ENCODE measurements at regions of chr5 and their contacts with region 1.

Region 1: DNA sequence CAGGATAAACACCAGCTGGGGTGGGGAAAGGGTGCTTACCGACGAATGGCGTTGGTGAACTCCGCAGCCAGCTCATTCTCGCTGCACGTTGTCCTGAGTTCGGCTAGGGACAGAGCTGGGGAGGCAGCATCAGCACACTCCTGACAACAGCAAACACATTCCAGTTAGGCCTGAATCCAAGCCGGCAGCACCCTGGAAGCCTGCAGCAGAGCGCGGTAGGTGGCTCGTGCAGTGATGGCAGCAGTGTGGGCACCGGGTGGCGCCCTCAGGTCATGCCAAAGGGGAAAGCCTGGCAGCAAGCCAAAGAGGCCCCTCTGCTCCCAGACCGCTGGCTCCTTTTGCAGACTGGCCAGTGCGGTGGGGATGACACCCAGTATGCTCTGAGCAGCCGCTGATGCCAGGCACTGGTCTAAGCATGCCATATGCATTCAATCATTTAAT is 66.9 kb downstream of the DCP2 start:
- DNase-seq: no peak
- ATAC-seq: no peak
- H3K4me3 ChIP-seq: no peak overlapping the region
- H3K27ac ChIP-seq: no peak overlapping the region
- H3K4me1 ChIP-seq: peaks cover 9% of the 10 kb centered on the region
- H3K27me3 ChIP-seq: 0 out of 4 replicates have a peak, but pooled peaks cover 0 to 2% of the 10 kb centered on the region in 2 experiments
- CTCF ChIP-seq: peak in 2 of 3 experiments; percentile 17 to 39; a peak in 3 of 6 replicates
- EP300 ChIP-seq: no peak
- POLR2A ChIP-seq: no peak
- RAD21 ChIP-seq: 0 out of 2 replicates have a peak, but pooled peaks have one; percentile 19

Region 2: DNA sequence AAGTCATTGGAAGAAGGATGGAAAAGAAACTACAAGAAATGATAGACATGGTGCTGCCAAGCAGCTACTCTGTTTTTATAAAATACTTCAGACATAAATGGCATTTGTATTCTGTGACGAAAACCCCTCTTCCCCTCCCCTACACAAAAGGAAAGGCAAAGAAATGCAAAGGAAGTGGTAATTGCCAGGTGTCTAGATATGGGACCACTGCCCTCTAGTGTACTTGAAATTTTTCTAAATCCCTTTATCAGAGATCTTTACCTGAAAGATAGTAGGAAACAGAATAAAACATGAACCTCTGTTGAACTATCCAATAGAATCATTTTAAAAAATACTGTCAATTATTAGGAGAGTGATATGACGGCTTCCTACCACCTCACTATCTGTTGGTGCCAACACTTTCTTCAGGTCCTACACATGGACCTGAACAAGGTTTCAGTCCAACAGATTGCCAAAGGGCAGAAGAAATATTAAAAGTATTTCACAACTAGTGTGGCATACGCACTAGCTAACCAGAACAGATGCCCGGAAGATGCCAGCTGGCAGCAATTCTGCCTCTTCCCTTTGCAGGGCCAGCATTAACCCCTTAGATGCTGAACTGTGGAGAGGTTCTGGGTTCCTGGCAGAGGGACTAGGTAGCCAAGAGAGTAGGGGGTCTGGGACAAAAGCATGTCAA is 287.2 kb after region 1 on chr5:
- CTCF ChIA-PET with region 1: no interaction called
- POLR2A ChIA-PET with region 1: no interaction called
- RAD21 ChIA-PET with region 1: no interaction called
- SMC1A ChIA-PET with region 1: no interaction called
- in situ Hi-C with region 1: no loop called
- intact Hi-C with region 1: loop called (anchors 5 kb)
- DNase-seq: no peak
- ATAC-seq: peak; percentile 52; the same call in 2 of the 3 replicates
- H3K4me3 ChIP-seq: no peak overlapping the region
- H3K27ac ChIP-seq: no peak overlapping the region
- H3K4me1 ChIP-seq: no peaks in the 10 kb centered on the region
- H3K27me3 ChIP-seq: no peaks in the 10 kb centered on the region
- CTCF ChIP-seq: peak; percentile 27 to 44 (median 34); a peak in 4 of 6 replicates
- EP300 ChIP-seq: no peak
- POLR2A ChIP-seq: no peak
- RAD21 ChIP-seq: peak; percentile 70

Region 3: DNA sequence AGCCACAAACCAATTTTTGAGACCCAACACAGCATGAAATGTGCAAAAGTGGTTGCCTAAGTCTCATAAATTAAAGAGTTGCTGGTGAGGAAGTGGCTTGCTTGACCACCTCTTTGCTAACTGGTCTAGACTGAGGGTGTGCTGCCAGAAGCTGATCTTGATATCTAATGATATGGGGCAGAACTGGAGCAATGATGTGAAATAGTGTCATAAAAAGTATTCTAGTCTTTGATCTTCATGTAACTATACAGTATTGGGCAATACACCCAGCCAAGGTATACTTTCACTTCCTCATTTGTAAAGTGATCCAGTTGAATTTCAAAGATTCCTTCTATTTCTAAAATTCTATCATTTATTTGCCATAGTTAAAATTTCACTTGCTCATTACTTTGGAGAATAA is 464.1 kb after region 1 on chr5:
- CTCF ChIA-PET with region 1: no interaction called
- POLR2A ChIA-PET with region 1: no interaction called
- RAD21 ChIA-PET with region 1: no interaction called
- SMC1A ChIA-PET with region 1: no interaction called
- in situ Hi-C with region 1: no loop called
- intact Hi-C with region 1: loop called (anchors 10 kb)
- DNase-seq: no peak
- ATAC-seq: peak; percentile 73
- H3K4me3 ChIP-seq: no peak overlapping the region
- H3K27ac ChIP-seq: no peak overlapping the region
- H3K4me1 ChIP-seq: no peaks in the 10 kb centered on the region
- H3K27me3 ChIP-seq: peaks cover 0 to 1% of the 10 kb centered on the region in 2 experiments; a peak in 2 of 4 replicates
- CTCF ChIP-seq: no peak
- EP300 ChIP-seq: no peak
- POLR2A ChIP-seq: no peak
- RAD21 ChIP-seq: no peak

Region 4: GRCh38 chr5:113606298-113607134 is 563.0 kb after region 1 on chr5:
- CTCF ChIA-PET with region 1: interaction called, 3 read pairs
- POLR2A ChIA-PET with region 1: no interaction called
- RAD21 ChIA-PET with region 1: interaction called, 3 read pairs
- SMC1A ChIA-PET with region 1: interaction called, 4 read pairs
- in situ Hi-C with region 1: no loop called
- intact Hi-C with region 1: loop called (anchors 5 kb)
- DNase-seq: peak; percentile 7
- ATAC-seq: peak; percentile 98
- H3K4me3 ChIP-seq: no peak overlapping the region
- H3K27ac ChIP-seq: no peak overlapping the region
- H3K4me1 ChIP-seq: no peaks in the 10 kb centered on the region
- H3K27me3 ChIP-seq: no peaks in the 10 kb centered on the region
- CTCF ChIP-seq: peak; percentile 63 to 82 (median 73)
- EP300 ChIP-seq: no peak
- POLR2A ChIP-seq: no peak
- RAD21 ChIP-seq: peak; percentile 96